GM12878 (cell line): ENCODE measurements at regions of chr12 and their contacts with region 1.

Region 1: GRCh38 chr12:89862511-89863179 is 154.0 kb upstream of the ATP2B1 start:
- DNase-seq: peak; percentile 79
- ATAC-seq: peak; percentile 75
- H3K4me3 ChIP-seq: peak overlapping the region; percentile 60
- H3K27ac ChIP-seq: peak overlapping the region; percentile 89
- H3K4me1 ChIP-seq: peaks cover 39% of the 10 kb centered on the region
- H3K27me3 ChIP-seq: no peaks in the 10 kb centered on the region
- CTCF ChIP-seq: no peak
- EP300 ChIP-seq: peak in 1 of 2 experiments; percentile 17; a peak in 1 of 4 replicates
- POLR2A ChIP-seq: peak; percentile 58
- RAD21 ChIP-seq: 0 out of 2 replicates have a peak, but pooled peaks have one; percentile 19

Region 2: GRCh38 chr12:89461649-89462612 is 400.7 kb before region 1 on chr12:
- CTCF ChIA-PET with region 1: no interaction called
- POLR2A ChIA-PET with region 1: no interaction called
- RAD21 ChIA-PET with region 1: no interaction called
- SMC1A ChIA-PET with region 1: no interaction called
- in situ Hi-C with region 1: no loop called
- intact Hi-C with region 1: no loop called
- DNase-seq: no peak
- ATAC-seq: peak; percentile 97
- H3K4me3 ChIP-seq: no peak overlapping the region
- H3K27ac ChIP-seq: no peak overlapping the region
- H3K4me1 ChIP-seq: no peaks in the 10 kb centered on the region
- H3K27me3 ChIP-seq: no peaks in the 10 kb centered on the region
- CTCF ChIP-seq: peak; percentile 30 to 68 (median 55); a peak in 5 of 6 replicates
- EP300 ChIP-seq: no peak
- POLR2A ChIP-seq: no peak
- RAD21 ChIP-seq: peak; percentile 90

Region 3: DNA sequence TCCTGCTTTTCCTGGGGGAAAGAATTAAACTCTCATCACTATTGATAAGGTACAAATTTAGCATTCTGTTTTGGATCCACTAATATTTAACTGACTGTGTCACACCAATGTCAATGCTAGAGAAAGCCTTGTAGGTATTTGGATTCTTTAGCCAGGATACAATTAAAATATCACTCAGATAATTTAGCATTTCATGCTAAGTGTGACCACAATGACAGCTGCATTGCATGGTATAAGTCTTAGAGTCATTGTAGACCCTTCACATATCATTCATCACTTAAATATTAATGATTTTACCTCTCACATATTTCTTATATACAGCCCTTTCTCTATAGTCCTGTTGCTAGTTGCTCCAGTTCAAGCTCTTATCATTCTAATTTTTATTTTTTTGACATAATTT is 68.7 kb before region 1 on chr12:
- CTCF ChIA-PET with region 1: no interaction called
- POLR2A ChIA-PET with region 1: no interaction called
- RAD21 ChIA-PET with region 1: interaction called, 4 read pairs
- SMC1A ChIA-PET with region 1: interaction called, 5 read pairs
- in situ Hi-C with region 1: no loop called
- intact Hi-C with region 1: loop called (anchors 2 kb)
- DNase-seq: no peak
- ATAC-seq: no peak
- H3K4me3 ChIP-seq: no peak overlapping the region
- H3K27ac ChIP-seq: no peak overlapping the region
- H3K4me1 ChIP-seq: peaks cover 4% of the 10 kb centered on the region; the same call in 1 of the 2 replicates
- H3K27me3 ChIP-seq: no peaks in the 10 kb centered on the region
- CTCF ChIP-seq: no peak
- EP300 ChIP-seq: no peak
- POLR2A ChIP-seq: no peak
- RAD21 ChIP-seq: no peak

Region 4: GRCh38 chr12:89873745-89874144 is 11.1 kb after region 1 on chr12:
- CTCF ChIA-PET with region 1: interaction called, 7 read pairs
- POLR2A ChIA-PET with region 1: interaction called, 4 read pairs
- RAD21 ChIA-PET with region 1: interaction called, 21 read pairs
- SMC1A ChIA-PET with region 1: interaction called, 49 read pairs
- in situ Hi-C with region 1: no loop called
- intact Hi-C with region 1: no loop called
- DNase-seq: no peak
- ATAC-seq: peak; percentile 64
- H3K4me3 ChIP-seq: no peak overlapping the region
- H3K27ac ChIP-seq: no peak overlapping the region
- H3K4me1 ChIP-seq: peaks cover 9% of the 10 kb centered on the region; the same call in 1 of the 2 replicates
- H3K27me3 ChIP-seq: no peaks in the 10 kb centered on the region
- CTCF ChIP-seq: no peak
- EP300 ChIP-seq: no peak
- POLR2A ChIP-seq: no peak
- RAD21 ChIP-seq: peak; percentile 51; the same call in 1 of the 2 replicates

Region 5: GRCh38 chr12:90076851-90077319 is 214.2 kb after region 1 on chr12:
- CTCF ChIA-PET with region 1: no interaction called
- POLR2A ChIA-PET with region 1: no interaction called
- RAD21 ChIA-PET with region 1: no interaction called
- SMC1A ChIA-PET with region 1: no interaction called
- in situ Hi-C with region 1: no loop called
- intact Hi-C with region 1: no loop called
- DNase-seq: no peak
- ATAC-seq: no peak; the same call in 2 of the 3 replicates
- H3K4me3 ChIP-seq: no peak overlapping the region
- H3K27ac ChIP-seq: no peak overlapping the region
- H3K4me1 ChIP-seq: no peaks in the 10 kb centered on the region; the same call in 1 of the 2 replicates
- H3K27me3 ChIP-seq: no peaks in the 10 kb centered on the region
- CTCF ChIP-seq: no peak
- EP300 ChIP-seq: no peak
- POLR2A ChIP-seq: no peak
- RAD21 ChIP-seq: no peak